GM12878 (cell line): ENCODE measurements at regions of chr12 and their contacts with region 1.

Region 1: GRCh38 chr12:4379405-4379804 is at the start of gene FGF23:
- DNase-seq: no peak
- ATAC-seq: peak; percentile 23; the same call in 1 of the 3 replicates
- H3K4me3 ChIP-seq: no peak within 1 kb of the TSS
- H3K27ac ChIP-seq: no peak within 1 kb of the TSS
- H3K4me1 ChIP-seq: no peaks in the 10 kb centered on the region
- H3K27me3 ChIP-seq: peaks cover 0 to 2% of the 10 kb centered on the region in 2 experiments; a peak in 2 of 4 replicates
- CTCF ChIP-seq: no peak
- EP300 ChIP-seq: no peak
- POLR2A ChIP-seq: no peak
- RAD21 ChIP-seq: no peak
- polyA plus RNA-seq, gene FGF23: not detected

Region 2: GRCh38 chr12:3820122-3820521 is 559.3 kb before region 1 on chr12:
- CTCF ChIA-PET with region 1: no interaction called
- POLR2A ChIA-PET with region 1: interaction called, 10 read pairs
- RAD21 ChIA-PET with region 1: no interaction called
- SMC1A ChIA-PET with region 1: no interaction called
- in situ Hi-C with region 1: no loop called
- intact Hi-C with region 1: no loop called
- DNase-seq: no peak
- ATAC-seq: no peak
- H3K4me3 ChIP-seq: no peak overlapping the region
- H3K27ac ChIP-seq: no peak overlapping the region
- H3K4me1 ChIP-seq: no peaks in the 10 kb centered on the region
- H3K27me3 ChIP-seq: no peaks in the 10 kb centered on the region
- CTCF ChIP-seq: no peak
- EP300 ChIP-seq: no peak
- POLR2A ChIP-seq: no peak
- RAD21 ChIP-seq: no peak